A549 (cell line): ENCODE measurements at regions of chr7 and their contacts with region 1.

Region 1: DNA sequence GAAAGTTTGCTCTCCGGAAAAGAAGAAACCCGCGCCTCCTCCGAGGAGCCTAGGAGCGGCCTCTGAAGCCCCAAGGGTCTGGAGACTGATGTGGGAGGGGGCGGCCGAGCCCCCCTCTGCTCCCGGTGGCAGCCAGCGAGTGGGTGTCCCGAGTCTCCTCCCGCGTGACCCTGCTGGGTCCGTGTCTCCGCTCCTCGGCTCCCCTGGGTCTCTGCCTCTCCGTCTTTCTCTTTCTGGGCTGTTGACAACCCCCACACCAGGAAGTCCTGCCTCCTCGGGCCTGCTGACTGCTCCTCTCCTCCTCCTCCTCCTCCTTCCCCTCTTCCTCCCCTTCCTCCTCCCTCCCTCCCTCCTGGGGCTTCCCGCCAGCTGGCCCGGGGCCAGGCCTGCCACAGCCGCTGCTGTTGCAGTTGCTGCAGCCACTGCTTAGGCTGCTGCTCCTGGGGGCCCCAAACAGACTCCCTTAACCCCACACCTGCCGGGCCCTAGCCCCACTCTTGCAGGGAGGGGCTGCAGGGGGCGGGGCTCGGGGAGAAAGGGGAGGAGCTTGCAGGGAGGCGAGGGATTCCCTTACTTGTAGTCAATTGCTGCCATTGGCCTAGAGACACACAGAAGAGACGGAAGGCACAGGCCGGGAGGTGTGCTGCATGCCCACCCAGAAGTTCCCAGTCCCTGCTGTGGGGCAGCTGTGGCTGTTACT is at the start of gene TSC22D4:
- DNase-seq: peak; percentile 90 to 91
- ATAC-seq: peak; percentile 70 to 85
- H3K4me3 ChIP-seq: peak within 1 kb of the TSS; percentile 75
- H3K27ac ChIP-seq: peak within 1 kb of the TSS; percentile 87 to 96
- H3K4me1 ChIP-seq: peaks cover 34% of the 10 kb centered on the region
- CTCF ChIP-seq: no peak
- EP300 ChIP-seq: no peak
- POLR2A ChIP-seq: peak; percentile 67
- RAD21 ChIP-seq: no peak
- polyA plus RNA-seq, gene TSC22D4: 6.2 and 7.9 TPM in 2 replicates

Region 2: GRCh38 chr7:100380196-100380595 is 98.9 kb before region 1 on chr7:
- CTCF ChIA-PET with region 1: no interaction called
- POLR2A ChIA-PET with region 1: no interaction called
- DNase-seq: no peak
- ATAC-seq: no peak
- H3K4me3 ChIP-seq: no peak overlapping the region
- H3K27ac ChIP-seq: no peak overlapping the region
- H3K4me1 ChIP-seq: no peaks in the 10 kb centered on the region
- CTCF ChIP-seq: no peak
- EP300 ChIP-seq: no peak
- POLR2A ChIP-seq: no peak
- RAD21 ChIP-seq: no peak

Region 3: GRCh38 chr7:100455206-100455605 is 23.9 kb before region 1 on chr7:
- CTCF ChIA-PET with region 1: interaction called, 12 read pairs
- POLR2A ChIA-PET with region 1: interaction called, 6 read pairs
- DNase-seq: no peak
- ATAC-seq: no peak
- H3K4me3 ChIP-seq: no peak overlapping the region
- H3K27ac ChIP-seq: no peak overlapping the region
- H3K4me1 ChIP-seq: 0 out of 3 replicates have a peak, but pooled peaks cover 3% of the 10 kb centered on the region
- CTCF ChIP-seq: no peak
- EP300 ChIP-seq: no peak
- POLR2A ChIP-seq: no peak
- RAD21 ChIP-seq: no peak

Region 4: GRCh38 chr7:100496509-100496908 is 17.4 kb after region 1 on chr7:
- CTCF ChIA-PET with region 1: interaction called, 19 read pairs
- POLR2A ChIA-PET with region 1: no interaction called
- DNase-seq: no peak
- ATAC-seq: no peak
- H3K4me3 ChIP-seq: no peak overlapping the region
- H3K27ac ChIP-seq: no peak overlapping the region
- H3K4me1 ChIP-seq: no peaks in the 10 kb centered on the region
- CTCF ChIP-seq: no peak
- EP300 ChIP-seq: no peak
- POLR2A ChIP-seq: no peak
- RAD21 ChIP-seq: no peak

Region 5: GRCh38 chr7:100506356-100506923 is 27.3 kb after region 1 on chr7:
- CTCF ChIA-PET with region 1: interaction called, 11 read pairs
- POLR2A ChIA-PET with region 1: no interaction called
- DNase-seq: peak in 1 of 2 experiments; percentile 57
- ATAC-seq: peak in 1 of 2 experiments; percentile 57; a peak in 3 of 6 replicates
- H3K4me3 ChIP-seq: no peak overlapping the region
- H3K27ac ChIP-seq: 0 out of 6 replicates have a peak overlapping the region, but pooled peaks of 1 of the 2 experiments have one; percentile 30
- H3K4me1 ChIP-seq: peaks cover 24% of the 10 kb centered on the region
- CTCF ChIP-seq: no peak
- EP300 ChIP-seq: no peak
- POLR2A ChIP-seq: no peak
- RAD21 ChIP-seq: no peak

Region 6: DNA sequence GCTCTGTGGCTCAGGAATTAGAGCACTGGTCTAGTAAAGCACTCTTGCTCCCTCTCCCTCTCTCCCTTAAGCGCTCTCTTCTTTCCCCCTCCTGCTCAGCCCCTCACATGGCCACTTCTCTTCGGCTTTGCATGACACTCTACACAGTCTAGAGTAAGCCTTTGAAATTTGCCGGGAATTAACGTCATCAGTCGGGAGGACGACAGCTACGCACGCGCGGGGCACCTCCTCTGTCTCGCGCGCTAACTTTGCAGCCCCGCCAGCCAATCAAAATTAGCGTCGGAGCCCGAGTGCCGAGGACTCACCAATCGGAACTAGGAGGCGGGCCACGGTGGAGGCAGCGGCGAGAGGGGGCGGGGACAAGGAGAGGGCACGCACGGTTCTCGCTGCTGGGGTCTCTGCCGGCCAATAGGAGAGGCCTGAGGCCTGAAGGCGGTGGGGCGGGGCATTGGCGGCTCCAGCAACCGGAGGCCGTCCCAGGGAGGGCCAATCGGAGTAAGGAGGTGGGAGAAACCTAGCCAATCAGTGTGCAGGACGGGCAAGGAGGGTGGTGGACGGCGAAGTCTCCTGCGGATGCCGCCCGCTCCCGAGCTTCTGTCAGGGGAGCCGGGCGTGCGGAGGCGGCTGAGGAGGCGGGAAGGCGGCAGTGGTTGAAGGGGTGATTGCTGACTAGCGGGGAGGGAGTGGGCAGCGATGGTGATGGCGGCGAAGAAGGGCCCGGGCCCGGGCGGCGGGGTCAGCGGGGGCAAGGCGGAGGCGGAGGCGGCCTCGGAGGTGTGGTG is 59.7 kb after region 1 on chr7 and contains the start of gene AGFG2:
- CTCF ChIA-PET with region 1: interaction called, 20 read pairs
- POLR2A ChIA-PET with region 1: interaction called, 3 read pairs
- DNase-seq: peak; percentile 99 to 100
- ATAC-seq: peak; percentile 97 to 99
- H3K4me3 ChIP-seq: peak within 1 kb of the TSS; percentile 68
- H3K27ac ChIP-seq: peak within 1 kb of the TSS; percentile 71 to 88
- H3K4me1 ChIP-seq: peaks cover 38% of the 10 kb centered on the region
- CTCF ChIP-seq: no peak
- EP300 ChIP-seq: no peak
- POLR2A ChIP-seq: peak; percentile 62
- RAD21 ChIP-seq: no peak; a peak in 1 of 5 replicates
- polyA plus RNA-seq, gene AGFG2: 13.5 and 16.0 TPM in 2 replicates

Region 7: DNA sequence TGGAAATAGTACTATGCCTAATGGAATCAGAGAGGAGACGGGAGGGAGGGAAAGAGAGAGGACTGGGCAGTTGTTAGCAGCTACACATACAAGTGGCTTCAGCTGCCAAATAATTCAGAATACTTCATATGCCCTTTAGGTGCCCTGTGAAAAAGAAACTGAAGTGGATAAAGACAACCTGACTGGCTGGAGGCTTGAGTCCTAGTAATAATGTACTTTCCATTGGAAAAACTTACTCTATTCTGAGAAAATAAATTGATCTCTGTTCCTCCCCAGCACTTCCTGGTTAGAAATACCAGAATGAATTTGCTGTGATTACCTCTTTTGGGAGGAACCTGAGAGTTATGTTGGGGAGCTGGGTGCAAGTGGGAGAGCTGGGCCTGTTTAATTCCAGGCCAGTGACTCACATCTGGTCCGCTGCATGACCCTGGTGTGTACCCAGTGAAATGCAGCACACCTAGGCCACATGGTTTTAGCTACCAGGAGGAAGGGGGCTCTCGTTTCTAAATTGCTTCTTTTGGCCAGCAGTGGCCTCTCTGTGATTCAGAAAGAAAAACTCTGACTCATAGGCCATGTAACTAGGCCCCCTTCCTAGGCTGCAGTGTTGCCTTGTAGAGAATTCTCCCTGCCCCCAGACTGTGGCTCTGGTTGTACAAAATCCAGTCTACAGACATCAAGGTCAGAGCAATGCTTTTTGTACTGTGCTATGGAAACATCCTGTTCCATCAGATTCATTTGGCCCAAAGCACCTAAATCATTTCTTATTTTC is 66.4 kb after region 1 on chr7:
- CTCF ChIA-PET with region 1: interaction called, 20 read pairs
- POLR2A ChIA-PET with region 1: interaction called, 5 read pairs
- DNase-seq: peak; percentile 91 to 93
- ATAC-seq: peak; percentile 93 to 94
- H3K4me3 ChIP-seq: peak overlapping the region; percentile 30; the same call in 1 of the 3 replicates
- H3K27ac ChIP-seq: peak overlapping the region; percentile 94 to 100
- H3K4me1 ChIP-seq: peaks cover 77% of the 10 kb centered on the region
- CTCF ChIP-seq: peak; percentile 15; the same call in 1 of the 3 replicates
- EP300 ChIP-seq: peak in 1 of 2 experiments; percentile 53; a peak in 1 of 5 replicates
- POLR2A ChIP-seq: no peak
- RAD21 ChIP-seq: peak in 1 of 2 experiments; percentile 32; a peak in 2 of 5 replicates

Region 8: DNA sequence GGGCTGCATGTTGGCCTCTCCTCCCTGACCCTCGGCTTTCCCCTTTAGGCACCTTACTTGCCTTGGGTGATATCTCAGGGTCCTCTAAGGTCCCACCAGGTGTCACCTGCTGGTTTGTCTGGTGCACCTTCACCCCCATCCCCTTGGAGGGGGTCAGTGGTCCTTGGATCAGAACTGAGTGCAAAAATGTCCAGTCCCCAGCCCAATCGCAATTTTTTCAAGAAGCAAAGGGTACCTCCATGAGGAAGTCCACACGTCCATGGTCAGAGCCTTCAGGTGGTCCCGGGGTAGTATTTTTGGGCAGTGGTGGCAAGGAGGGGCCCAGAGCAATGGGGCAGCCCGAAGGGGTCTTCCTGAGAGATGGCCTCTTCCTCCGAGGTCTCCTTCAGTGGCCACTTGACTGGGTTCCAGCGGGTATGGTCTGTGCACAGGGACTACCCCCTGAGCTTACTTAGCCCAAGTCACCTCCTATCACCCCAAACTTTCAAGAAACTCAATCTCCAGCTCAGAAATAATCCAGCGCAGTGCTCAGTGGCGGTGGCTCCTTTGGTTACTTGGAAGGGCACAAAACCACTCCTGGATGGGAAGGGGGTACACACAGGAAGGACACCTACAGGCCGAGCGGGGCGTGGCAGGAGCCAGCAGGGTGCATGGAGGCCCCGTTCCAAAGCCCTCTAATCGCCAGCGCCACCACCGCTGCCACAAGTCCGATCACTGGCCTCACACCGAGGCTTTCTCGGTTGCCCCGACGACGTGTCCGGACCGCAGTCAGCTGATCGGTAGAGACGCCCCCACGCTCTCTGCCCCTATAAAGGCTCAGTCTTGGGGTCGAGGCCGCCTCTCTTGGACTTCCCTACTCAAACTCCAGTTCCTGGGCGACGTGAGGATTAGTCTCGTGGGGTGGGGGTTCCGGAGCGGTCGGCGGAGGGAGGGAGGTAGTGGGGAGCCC is 90.1 kb after region 1 on chr7:
- CTCF ChIA-PET with region 1: interaction called, 12 read pairs
- POLR2A ChIA-PET with region 1: no interaction called
- DNase-seq: peak in 1 of 2 experiments; percentile 62
- ATAC-seq: peak in 1 of 2 experiments; percentile 59; a peak in 3 of 6 replicates
- H3K4me3 ChIP-seq: no peak overlapping the region
- H3K27ac ChIP-seq: no peak overlapping the region
- H3K4me1 ChIP-seq: peaks cover 15% of the 10 kb centered on the region; the same call in 2 of the 3 replicates
- CTCF ChIP-seq: no peak
- EP300 ChIP-seq: no peak
- POLR2A ChIP-seq: no peak
- RAD21 ChIP-seq: no peak

Region 9: GRCh38 chr7:100602883-100603725 is 124.0 kb after region 1 on chr7:
- CTCF ChIA-PET with region 1: no interaction called
- POLR2A ChIA-PET with region 1: no interaction called
- DNase-seq: no peak
- ATAC-seq: no peak
- H3K4me3 ChIP-seq: no peak overlapping the region
- H3K27ac ChIP-seq: peak overlapping the region in 1 of 2 experiments; percentile 86; a peak in 2 of 6 replicates
- H3K4me1 ChIP-seq: 0 out of 3 replicates have a peak, but pooled peaks cover 8% of the 10 kb centered on the region
- CTCF ChIP-seq: no peak
- EP300 ChIP-seq: no peak
- POLR2A ChIP-seq: no peak
- RAD21 ChIP-seq: no peak